ENCODE measurements at regions of chr3 and their contacts with region 1.

Region 1: GRCh38 chr3:129490242-129491045 is 38.0 kb upstream of the RHO start:
- DNase-seq: peak; percentile 71
- ATAC-seq: peak; percentile 96
- H3K4me3 Mint-ChIP-seq: no peak overlapping the region
- H3K27ac Mint-ChIP-seq: no peak overlapping the region
- H3K4me1 Mint-ChIP-seq: no peaks in the 10 kb centered on the region
- H3K27me3 Mint-ChIP-seq: no peaks in the 10 kb centered on the region

Region 2: GRCh38 chr3:129606636-129607390 is 116.4 kb after region 1 on chr3 and contains the start of gene PLXND1:
- CTCF ChIA-PET with region 1: interaction called, 7 read pairs
- POLR2A ChIA-PET with region 1: no interaction called
- intact Hi-C with region 1: loop called (anchors 5 to 10 kb)
- DNase-seq: peak; percentile 52
- ATAC-seq: peak; percentile 47
- H3K4me3 Mint-ChIP-seq: peak within 1 kb of the TSS; percentile 78
- H3K27ac Mint-ChIP-seq: peak within 1 kb of the TSS; percentile 89
- H3K4me1 Mint-ChIP-seq: peaks cover 10% of the 10 kb centered on the region
- H3K27me3 Mint-ChIP-seq: peaks cover 18% of the 10 kb centered on the region
- total RNA-seq, gene PLXND1: 3.1 to 4.6 TPM

Measured in activated CD4-positive, alpha-beta T cell treated with anti-CD3 and anti-CD28 coated beads for 36 hours (primary cell).